Heart left ventricle (tissue), 16 donors: ENCODE measurements at regions of chr4 and their contacts with region 1.

Region 1: GRCh38 chr4:102449751-102450352 is 51.3 kb upstream of the NFKB1 start:
- DNase-seq: peak in 1 of 5 donors; percentile 28
- ATAC-seq: peak in 2 of 4 donors; percentile 52 to 55
- H3K4me3 ChIP-seq: no peak overlapping the region
- H3K27ac ChIP-seq: no peak overlapping the region
- H3K4me1 ChIP-seq: peaks cover 0 to 3% (median 0%) of the 10 kb centered on the region in 12 donors
- H3K27me3 ChIP-seq: no peaks in the 10 kb centered on the region
- CTCF ChIP-seq: peak; percentile 39 to 74 (median 61)
- POLR2A ChIP-seq: no peak

Region 2: GRCh38 chr4:102404431-102405028 is 45.3 kb before region 1 on chr4:
- intact Hi-C with region 1: no loop called
- DNase-seq: no peak
- ATAC-seq: no peak
- H3K4me3 ChIP-seq: no peak overlapping the region
- H3K27ac ChIP-seq: peak overlapping the region in 1 of 12 donors; percentile 2
- H3K4me1 ChIP-seq: peaks cover 0 to 27% (median 0%) of the 10 kb centered on the region in 12 donors
- H3K27me3 ChIP-seq: no peaks in the 10 kb centered on the region
- CTCF ChIP-seq: no peak
- POLR2A ChIP-seq: no peak

Region 3: GRCh38 chr4:102604222-102604948 is 154.5 kb after region 1 on chr4:
- intact Hi-C with region 1: loop called in 1 of 10 experiments (anchors 5 kb)
- DNase-seq: no peak
- ATAC-seq: no peak
- H3K4me3 ChIP-seq: no peak overlapping the region
- H3K27ac ChIP-seq: no peak overlapping the region
- H3K4me1 ChIP-seq: no peaks in the 10 kb centered on the region
- H3K27me3 ChIP-seq: no peaks in the 10 kb centered on the region
- CTCF ChIP-seq: no peak
- POLR2A ChIP-seq: no peak

Region 4: DNA sequence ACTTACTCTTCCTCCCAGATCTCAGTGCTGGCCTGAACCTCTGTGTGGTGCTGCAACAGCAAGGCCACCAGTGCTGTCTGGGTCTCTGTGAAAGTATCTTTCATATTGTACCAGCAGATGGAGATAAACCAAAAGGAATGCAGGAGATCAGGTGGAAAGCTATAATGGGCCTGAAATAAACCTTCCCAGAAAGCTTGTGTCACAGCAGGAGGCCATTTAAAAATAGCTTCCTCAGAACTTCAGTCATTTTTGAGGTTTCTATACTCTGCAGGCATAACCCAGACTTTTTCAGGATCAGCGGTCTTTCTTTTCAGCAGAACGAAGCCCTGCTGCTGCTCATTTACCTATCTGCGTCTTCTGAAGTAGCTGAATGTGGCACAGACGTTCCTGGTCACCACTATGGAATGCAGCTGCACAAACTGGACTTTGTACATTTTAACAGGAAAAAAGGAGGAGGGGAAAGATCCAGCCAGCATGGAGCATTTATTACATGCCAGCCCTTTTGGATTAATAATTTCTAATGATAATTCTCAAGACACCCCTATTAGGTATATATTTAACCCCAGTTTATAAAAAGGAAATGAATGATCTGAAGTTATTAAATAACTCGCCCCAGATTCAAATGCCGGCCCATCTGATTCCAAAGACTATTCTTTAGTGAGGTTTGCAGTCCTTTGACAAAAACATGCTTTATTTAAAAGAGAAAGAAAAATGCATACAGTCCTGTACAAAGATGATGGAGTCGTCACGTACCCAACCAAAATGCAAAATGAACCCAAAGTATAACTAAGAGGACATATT is 171.0 kb after region 1 on chr4:
- intact Hi-C with region 1: loop called in 9 of 10 experiments (anchors 5 to 10 kb)
- DNase-seq: no peak
- ATAC-seq: peak; percentile 91 to 95 (median 92)
- H3K4me3 ChIP-seq: peak overlapping the region in 7 of 12 donors; percentile 1 to 35 (median 17)
- H3K27ac ChIP-seq: peak overlapping the region in 1 of 12 donors; percentile 58
- H3K4me1 ChIP-seq: peaks cover 0 to 19% (median 4%) of the 10 kb centered on the region in 12 donors
- H3K27me3 ChIP-seq: no peaks in the 10 kb centered on the region
- CTCF ChIP-seq: peak; percentile 18 to 64 (median 46)
- POLR2A ChIP-seq: no peak

Region 5: GRCh38 chr4:102684610-102685052 is 234.8 kb after region 1 on chr4:
- intact Hi-C with region 1: no loop called
- DNase-seq: no peak
- ATAC-seq: no peak
- H3K4me3 ChIP-seq: no peak overlapping the region
- H3K27ac ChIP-seq: no peak overlapping the region
- H3K4me1 ChIP-seq: peaks cover 0 to 20% (median 5%) of the 10 kb centered on the region in 12 donors
- H3K27me3 ChIP-seq: no peaks in the 10 kb centered on the region
- CTCF ChIP-seq: no peak
- POLR2A ChIP-seq: no peak

Region 6: DNA sequence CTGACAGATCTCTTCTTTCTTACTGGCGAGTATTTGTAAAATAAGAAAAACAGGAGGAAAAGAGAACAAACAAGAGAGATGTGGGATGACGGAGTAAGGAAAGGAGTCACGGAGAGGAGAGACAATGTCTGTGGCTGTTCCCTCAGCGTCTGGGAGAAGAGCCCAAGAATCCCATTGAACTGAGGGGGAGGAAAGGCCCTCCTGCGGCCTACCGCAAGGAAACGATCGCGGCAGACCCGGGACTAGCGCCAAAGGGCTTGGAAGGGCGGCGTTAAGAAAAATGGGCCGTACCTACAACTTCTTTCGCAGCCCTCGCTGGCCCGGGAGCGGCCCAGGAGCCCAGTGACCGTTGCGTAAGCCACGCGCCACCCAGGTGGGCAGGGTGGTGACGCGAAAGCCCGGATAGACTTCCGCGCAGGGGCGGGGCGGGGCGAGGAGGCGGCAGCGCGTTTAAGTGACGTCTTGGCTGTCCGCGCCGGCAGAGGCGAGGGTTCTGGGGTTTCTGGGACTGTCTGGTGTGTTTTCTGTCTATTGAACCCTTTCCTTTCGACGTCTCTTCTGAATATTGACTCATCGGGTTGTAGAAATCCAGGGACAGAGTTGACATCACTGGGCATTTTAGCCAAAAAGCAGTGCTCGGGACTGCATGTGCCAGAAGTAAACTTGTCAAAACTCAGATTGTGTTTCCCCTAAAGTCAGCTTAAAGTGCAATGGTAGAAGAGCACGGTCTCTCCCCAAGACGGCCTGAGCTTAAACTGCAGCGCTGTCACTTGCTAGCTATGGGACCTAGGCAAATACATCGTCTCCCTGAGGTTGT is 569.7 kb after region 1 on chr4 and contains the start of gene SLC9B1:
- intact Hi-C with region 1: loop called in 3 of 10 experiments (anchors 5 kb)
- DNase-seq: peak; percentile 95 to 97 (median 96)
- ATAC-seq: peak; percentile 99 to 100 (median 100)
- H3K4me3 ChIP-seq: peak within 1 kb of the TSS; percentile 30 to 67 (median 59)
- H3K27ac ChIP-seq: peak within 1 kb of the TSS; percentile 65 to 92 (median 88)
- H3K4me1 ChIP-seq: peaks cover 0 to 18% (median 5%) of the 10 kb centered on the region in 12 donors
- H3K27me3 ChIP-seq: no peaks in the 10 kb centered on the region
- CTCF ChIP-seq: no peak
- POLR2A ChIP-seq: peak in 1 of 2 donors; percentile 69
- total RNA-seq, gene SLC9B1: 0.28 to 1.8 (median 0.61) TPM in 6 of 9 donors, not detected in the others

Region 7: GRCh38 chr4:103099691-103100392 is 650.0 kb after region 1 on chr4 and contains the start of gene BDH2:
- intact Hi-C with region 1: loop called in 5 of 10 experiments (anchors 2 to 10 kb)
- DNase-seq: peak in 3 of 5 donors; percentile 39 to 64 (median 58)
- ATAC-seq: peak; percentile 91 to 98 (median 96)
- H3K4me3 ChIP-seq: peak within 1 kb of the TSS; percentile 41 to 68 (median 56)
- H3K27ac ChIP-seq: peak within 1 kb of the TSS; percentile 31 to 77 (median 62)
- H3K4me1 ChIP-seq: peaks cover 0 to 32% (median 10%) of the 10 kb centered on the region in 12 donors
- H3K27me3 ChIP-seq: no peaks in the 10 kb centered on the region
- CTCF ChIP-seq: peak; percentile 66 to 84 (median 78)
- POLR2A ChIP-seq: no peak
- total RNA-seq, gene BDH2: 20.3 to 38.0 (median 25.8) TPM